K562 (cell line): ENCODE measurements at regions of chr4 and their contacts with region 1.

Region 1: GRCh38 chr4:99949034-99949998 is 759 bp downstream of the H2AZ1 start:
- DNase-seq: peak; percentile 75 to 95 (median 78)
- ATAC-seq: peak; percentile 54
- H3K4me3 ChIP-seq: peak overlapping the region; percentile 62
- H3K27ac ChIP-seq: peak overlapping the region; percentile 99
- H3K4me1 ChIP-seq: peaks cover 14 to 19% of the 10 kb centered on the region in 2 experiments
- H3K27me3 ChIP-seq: no peaks in the 10 kb centered on the region
- CTCF ChIP-seq: peak; percentile 78 to 91 (median 85)
- EP300 ChIP-seq: peak; percentile 38; the same call in 1 of the 2 replicates
- POLR2A ChIP-seq: peak; percentile 79
- RAD21 ChIP-seq: peak; percentile 47 to 56

Region 2: GRCh38 chr4:99563310-99564186 is 385.8 kb before region 1 on chr4 and contains the start of gene TRMT10A:
- CTCF ChIA-PET with region 1: interaction called, 3 read pairs
- POLR2A ChIA-PET with region 1: interaction called, 8 read pairs
- in situ Hi-C with region 1: no loop called
- intact Hi-C with region 1: loop called (anchors 5 kb)
- DNase-seq: peak; percentile 83 to 98 (median 86)
- ATAC-seq: peak; percentile 94
- H3K4me3 ChIP-seq: peak within 1 kb of the TSS; percentile 65
- H3K27ac ChIP-seq: peak within 1 kb of the TSS; percentile 96
- H3K4me1 ChIP-seq: peaks cover 0 to 4% of the 10 kb centered on the region in 2 experiments; a peak in 1 of 5 replicates
- H3K27me3 ChIP-seq: no peaks in the 10 kb centered on the region
- CTCF ChIP-seq: no peak
- EP300 ChIP-seq: 0 out of 2 replicates have a peak, but pooled peaks have one; percentile 9
- POLR2A ChIP-seq: peak; percentile 92
- RAD21 ChIP-seq: no peak
- polyA plus RNA-seq, gene TRMT10A: 13.1 to 16.1 TPM

Region 3: GRCh38 chr4:99808260-99808857 is 141.0 kb before region 1 on chr4:
- CTCF ChIA-PET with region 1: no interaction called
- POLR2A ChIA-PET with region 1: interaction called, 9 read pairs
- in situ Hi-C with region 1: no loop called
- intact Hi-C with region 1: loop called (anchors 2 kb)
- DNase-seq: peak; percentile 61 to 77 (median 68)
- ATAC-seq: peak; percentile 94
- H3K4me3 ChIP-seq: no peak overlapping the region
- H3K27ac ChIP-seq: no peak overlapping the region
- H3K4me1 ChIP-seq: no peaks in the 10 kb centered on the region; a peak in 1 of 5 replicates
- H3K27me3 ChIP-seq: peaks cover 4 to 24% of the 10 kb centered on the region in 2 experiments; a peak in 3 of 5 replicates
- CTCF ChIP-seq: peak; percentile 85 to 89 (median 87)
- EP300 ChIP-seq: no peak
- POLR2A ChIP-seq: no peak
- RAD21 ChIP-seq: peak; percentile 90 to 93

Region 4: GRCh38 chr4:99885063-99885664 is 64.2 kb before region 1 on chr4:
- CTCF ChIA-PET with region 1: interaction called, 4 read pairs
- POLR2A ChIA-PET with region 1: interaction called, 3 read pairs
- in situ Hi-C with region 1: no loop called
- intact Hi-C with region 1: loop called (anchors 1 kb)
- DNase-seq: peak; percentile 23 to 62 (median 31)
- ATAC-seq: peak; percentile 72
- H3K4me3 ChIP-seq: no peak overlapping the region
- H3K27ac ChIP-seq: no peak overlapping the region
- H3K4me1 ChIP-seq: no peaks in the 10 kb centered on the region
- H3K27me3 ChIP-seq: no peaks in the 10 kb centered on the region
- CTCF ChIP-seq: peak; percentile 47 to 81 (median 50); a peak in 4 of 6 replicates
- EP300 ChIP-seq: no peak
- POLR2A ChIP-seq: no peak
- RAD21 ChIP-seq: peak; percentile 81 to 83

Region 5: DNA sequence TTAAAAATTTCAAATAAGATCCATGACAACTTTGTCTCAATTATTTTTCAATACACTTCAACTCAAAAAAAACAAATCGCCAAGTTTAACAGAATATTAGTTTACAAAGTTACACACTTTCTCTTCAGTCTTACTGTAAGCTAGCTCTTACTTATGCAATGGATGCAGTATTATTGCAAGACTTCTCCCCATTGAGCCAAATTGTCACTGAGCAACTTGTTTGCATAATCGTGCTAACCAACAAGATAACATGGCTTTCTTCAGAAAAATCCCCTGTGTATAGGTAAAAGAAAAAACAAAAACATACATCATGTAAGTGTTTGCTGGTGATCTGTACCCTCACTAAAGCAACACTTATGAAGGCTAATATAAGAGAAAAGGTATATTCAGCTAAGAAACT is 21.8 kb before region 1 on chr4:
- CTCF ChIA-PET with region 1: no interaction called
- POLR2A ChIA-PET with region 1: interaction called, 20 read pairs
- in situ Hi-C with region 1: no loop called
- intact Hi-C with region 1: no loop called
- DNase-seq: no peak
- ATAC-seq: no peak
- H3K4me3 ChIP-seq: no peak overlapping the region
- H3K27ac ChIP-seq: no peak overlapping the region
- H3K4me1 ChIP-seq: no peaks in the 10 kb centered on the region; a peak in 1 of 5 replicates
- H3K27me3 ChIP-seq: no peaks in the 10 kb centered on the region
- CTCF ChIP-seq: no peak
- EP300 ChIP-seq: no peak
- POLR2A ChIP-seq: no peak
- RAD21 ChIP-seq: no peak

Region 6: GRCh38 chr4:100632163-100632562 is 682.8 kb after region 1 on chr4:
- CTCF ChIA-PET with region 1: no interaction called
- POLR2A ChIA-PET with region 1: no interaction called
- in situ Hi-C with region 1: no loop called
- intact Hi-C with region 1: no loop called
- DNase-seq: no peak
- ATAC-seq: no peak
- H3K4me3 ChIP-seq: no peak overlapping the region
- H3K27ac ChIP-seq: no peak overlapping the region
- H3K4me1 ChIP-seq: no peaks in the 10 kb centered on the region
- H3K27me3 ChIP-seq: no peaks in the 10 kb centered on the region
- CTCF ChIP-seq: no peak
- EP300 ChIP-seq: no peak
- POLR2A ChIP-seq: no peak
- RAD21 ChIP-seq: no peak